SK-N-SH (cell line): ENCODE measurements at regions of chr20 and their contacts with region 1.

Region 1: DNA sequence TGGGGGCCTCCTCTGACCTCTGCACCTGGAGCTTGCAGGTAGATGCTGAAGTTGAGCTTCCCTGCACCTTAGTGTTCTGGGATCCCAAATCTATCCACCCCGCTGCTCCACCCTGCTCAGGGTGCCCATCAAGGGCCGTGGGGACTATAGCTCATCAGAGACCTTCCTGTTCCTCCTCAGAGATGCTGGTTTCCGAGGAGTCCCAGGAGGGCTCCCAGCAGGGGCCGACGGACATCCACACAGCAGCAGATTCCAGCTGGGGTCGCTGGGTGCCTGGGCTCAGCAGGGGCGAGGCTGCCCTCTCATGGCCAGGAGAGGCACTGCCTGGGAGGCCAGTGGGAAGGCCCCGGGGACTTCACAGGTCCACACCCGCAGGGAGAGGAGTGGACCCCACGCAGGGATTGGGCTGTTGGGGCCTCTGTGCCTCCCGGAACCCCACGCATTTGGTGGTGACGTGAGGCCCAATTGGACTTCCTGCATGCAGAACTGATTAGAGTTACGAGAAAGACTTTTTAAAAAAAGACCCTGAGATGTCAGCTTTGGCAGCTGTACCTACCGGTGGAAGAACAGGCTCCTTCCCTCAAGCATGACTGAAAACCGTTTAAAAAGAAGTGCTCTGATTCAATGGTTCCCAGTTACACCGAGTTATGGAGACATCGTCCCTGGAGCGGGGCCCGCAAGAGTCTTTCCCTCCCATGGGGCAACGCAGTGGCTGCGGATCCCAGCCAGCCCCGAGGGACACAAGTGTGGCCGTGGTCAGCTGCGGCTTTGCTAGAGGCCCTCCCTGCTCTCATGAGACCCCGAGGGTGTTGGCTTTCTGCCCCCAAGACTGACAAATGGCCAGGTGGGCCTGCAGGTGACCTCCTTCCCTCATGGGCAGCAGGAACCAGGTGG is 25.3 kb upstream of the SLCO4A1 start:
- DNase-seq: peak; percentile 95
- H3K4me3 ChIP-seq: no peak overlapping the region; a peak in 1 of 4 replicates
- H3K27ac ChIP-seq: no peak overlapping the region
- H3K4me1 ChIP-seq: peaks cover 0 to 3% of the 10 kb centered on the region in 2 experiments; a peak in 1 of 4 replicates
- H3K27me3 ChIP-seq: no peaks in the 10 kb centered on the region
- CTCF ChIP-seq: peak; percentile 90
- EP300 ChIP-seq: peak in 1 of 2 experiments; percentile 18; a peak in 1 of 4 replicates
- RAD21 ChIP-seq: peak; percentile 96

Region 2: GRCh38 chr20:62409931-62410745 is 206.8 kb before region 1 on chr20:
- CTCF ChIA-PET with region 1: interaction called, 65 read pairs
- POLR2A ChIA-PET with region 1: no interaction called
- DNase-seq: peak; percentile 92
- H3K4me3 ChIP-seq: no peak overlapping the region; a peak in 1 of 4 replicates
- H3K27ac ChIP-seq: no peak overlapping the region; a peak in 1 of 4 replicates
- H3K4me1 ChIP-seq: peaks cover 0 to 44% of the 10 kb centered on the region in 2 experiments; a peak in 1 of 4 replicates
- H3K27me3 ChIP-seq: no peaks in the 10 kb centered on the region
- CTCF ChIP-seq: peak; percentile 64
- EP300 ChIP-seq: no peak
- RAD21 ChIP-seq: peak; percentile 70

Region 3: GRCh38 chr20:62513991-62514390 is 103.0 kb before region 1 on chr20:
- CTCF ChIA-PET with region 1: interaction called, 22 read pairs
- POLR2A ChIA-PET with region 1: no interaction called
- DNase-seq: no peak
- H3K4me3 ChIP-seq: no peak overlapping the region
- H3K27ac ChIP-seq: no peak overlapping the region
- H3K4me1 ChIP-seq: no peaks in the 10 kb centered on the region; a peak in 1 of 4 replicates
- H3K27me3 ChIP-seq: no peaks in the 10 kb centered on the region; the same call in 1 of the 2 replicates
- CTCF ChIP-seq: no peak
- EP300 ChIP-seq: no peak
- RAD21 ChIP-seq: no peak

Region 4: DNA sequence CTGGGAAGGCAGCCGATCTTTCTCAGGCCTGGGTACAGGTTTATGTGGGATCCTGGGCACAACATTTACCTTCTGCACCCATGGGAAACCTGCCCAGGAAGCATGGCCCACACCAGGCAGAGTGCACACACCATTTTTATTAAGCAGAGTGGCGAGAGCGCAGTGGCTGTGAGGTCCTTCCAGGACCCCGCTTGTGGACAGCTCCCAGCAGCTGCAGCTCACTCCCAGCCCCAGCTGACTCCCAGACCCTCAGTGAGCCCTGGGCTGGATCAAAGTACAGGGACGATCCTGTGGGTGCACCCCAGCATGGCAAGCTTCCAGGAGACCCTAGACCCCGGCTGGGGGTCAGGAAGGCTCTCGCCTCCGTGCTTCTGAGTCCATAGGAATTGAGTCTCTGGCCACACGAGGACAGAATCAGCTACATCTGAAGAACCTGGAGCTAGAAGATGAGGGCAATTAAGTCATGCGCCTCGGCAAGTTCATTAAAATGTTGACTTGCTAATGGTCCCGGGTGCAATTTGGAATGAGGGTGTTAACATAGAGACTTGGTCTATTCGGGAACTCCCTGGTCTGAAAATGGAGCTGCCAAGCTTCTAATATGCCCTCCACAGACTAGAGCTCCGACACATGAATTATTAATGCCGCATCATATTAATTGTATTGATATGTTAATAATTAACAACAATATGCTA is 40.0 kb before region 1 on chr20:
- CTCF ChIA-PET with region 1: interaction called, 53 read pairs
- POLR2A ChIA-PET with region 1: no interaction called
- DNase-seq: no peak
- H3K4me3 ChIP-seq: no peak overlapping the region
- H3K27ac ChIP-seq: no peak overlapping the region
- H3K4me1 ChIP-seq: no peaks in the 10 kb centered on the region
- H3K27me3 ChIP-seq: peaks cover 8% of the 10 kb centered on the region
- CTCF ChIP-seq: no peak
- EP300 ChIP-seq: no peak
- RAD21 ChIP-seq: no peak

Region 5: DNA sequence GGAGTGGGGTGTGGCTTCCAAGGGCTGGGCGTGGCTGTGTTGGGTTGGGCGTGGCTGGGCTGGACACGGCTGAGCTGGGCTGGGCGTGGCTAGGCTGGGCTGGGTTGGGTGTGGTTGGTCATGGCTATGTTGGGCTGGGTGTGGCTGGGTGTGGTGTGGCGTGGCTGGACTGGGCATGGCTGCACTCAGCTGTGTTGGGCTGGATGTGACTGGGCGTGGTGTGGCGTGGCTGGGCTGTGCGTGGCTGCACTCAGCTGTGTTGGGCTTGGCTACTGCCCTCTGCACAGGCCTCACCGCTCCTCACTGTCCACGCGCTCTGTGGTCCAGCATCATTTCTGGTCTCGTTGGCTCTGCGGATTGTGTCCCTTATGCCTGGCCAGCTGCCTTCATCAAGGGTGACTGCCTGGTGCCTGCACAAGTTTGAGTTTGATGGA is 18.2 kb before region 1 on chr20:
- CTCF ChIA-PET with region 1: interaction called, 22 read pairs
- POLR2A ChIA-PET with region 1: no interaction called
- DNase-seq: no peak
- H3K4me3 ChIP-seq: no peak overlapping the region
- H3K27ac ChIP-seq: no peak overlapping the region
- H3K4me1 ChIP-seq: peaks cover 7 to 8% of the 10 kb centered on the region in 2 experiments; a peak in 3 of 4 replicates
- H3K27me3 ChIP-seq: no peaks in the 10 kb centered on the region
- CTCF ChIP-seq: no peak
- EP300 ChIP-seq: no peak
- RAD21 ChIP-seq: no peak

Region 6: GRCh38 chr20:62652051-62652926 is 35.3 kb after region 1 on chr20:
- CTCF ChIA-PET with region 1: interaction called, 11 read pairs
- POLR2A ChIA-PET with region 1: no interaction called
- DNase-seq: peak; percentile 70
- H3K4me3 ChIP-seq: peak overlapping the region in 1 of 2 experiments; percentile 19; a peak in 1 of 4 replicates
- H3K27ac ChIP-seq: peak overlapping the region in 1 of 2 experiments; percentile 99; a peak in 2 of 4 replicates
- H3K4me1 ChIP-seq: peaks cover 0 to 71% of the 10 kb centered on the region in 2 experiments; a peak in 3 of 4 replicates
- H3K27me3 ChIP-seq: no peaks in the 10 kb centered on the region
- CTCF ChIP-seq: no peak
- EP300 ChIP-seq: no peak
- RAD21 ChIP-seq: no peak

Region 7: DNA sequence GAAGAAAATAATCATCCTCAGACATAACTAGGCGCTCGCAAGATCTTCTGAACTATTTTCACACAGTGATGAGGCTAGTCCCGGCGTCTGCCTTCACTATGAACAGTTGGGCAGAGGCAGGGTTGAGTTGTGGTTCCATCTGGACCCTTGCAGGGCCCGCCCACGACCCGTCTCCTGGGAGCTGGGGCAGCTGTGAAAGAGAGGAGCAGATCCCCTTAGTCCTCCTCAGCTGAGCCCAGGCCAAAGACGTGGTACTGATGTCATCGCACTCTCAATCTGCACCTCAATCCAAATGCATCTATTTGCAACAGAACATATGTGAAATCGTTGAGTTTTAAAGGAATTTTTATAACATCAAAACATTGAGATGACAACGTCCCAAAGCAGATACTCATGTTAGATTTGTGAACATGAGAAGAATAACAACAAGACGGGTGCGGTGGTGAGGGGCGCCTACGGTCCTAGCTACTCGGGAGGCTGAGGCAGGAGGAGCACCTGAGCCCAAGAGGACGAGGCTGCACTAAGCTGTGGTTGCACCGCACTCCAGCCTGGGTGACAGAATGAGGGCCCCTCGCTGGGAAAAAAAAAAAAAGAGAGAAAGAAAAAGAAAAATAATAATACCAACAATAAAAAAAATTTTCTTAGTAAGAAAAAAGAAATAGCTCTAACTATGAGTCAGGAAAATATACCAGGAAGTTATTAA is 229.4 kb after region 1 on chr20:
- CTCF ChIA-PET with region 1: no interaction called
- POLR2A ChIA-PET with region 1: no interaction called
- DNase-seq: no peak
- H3K4me3 ChIP-seq: no peak overlapping the region
- H3K27ac ChIP-seq: no peak overlapping the region
- H3K4me1 ChIP-seq: no peaks in the 10 kb centered on the region
- H3K27me3 ChIP-seq: no peaks in the 10 kb centered on the region
- CTCF ChIP-seq: no peak
- EP300 ChIP-seq: no peak
- RAD21 ChIP-seq: no peak